Astrocyte of the cerebellum (primary cell): ENCODE measurements at regions of chr5 and their contacts with region 1.

Region 1: DNA sequence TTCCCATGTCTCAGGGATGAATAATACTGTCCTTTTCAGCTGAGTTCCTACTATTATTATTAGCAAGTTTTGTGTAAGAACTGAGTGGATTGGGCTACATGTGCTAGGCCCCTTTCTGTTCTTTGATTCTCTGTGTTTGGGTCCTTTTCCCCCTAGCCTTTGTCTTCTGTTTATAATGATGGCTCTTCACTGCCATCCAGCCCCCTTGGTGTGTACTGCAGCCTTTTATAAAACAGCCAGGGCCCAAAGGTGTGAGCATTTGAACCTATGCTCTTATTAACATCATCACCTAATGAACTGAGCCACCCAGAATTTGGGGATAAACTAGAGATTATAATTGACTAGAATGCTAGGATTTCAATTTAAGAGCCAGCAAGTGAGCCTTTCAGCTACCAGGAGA is 52.6 kb downstream of the PLAC8L1 start:
- DNase-seq: no peak
- H3K4me3 ChIP-seq: no peak overlapping the region
- CTCF ChIP-seq: peak; percentile 51

Region 2: GRCh38 chr5:145681686-145682085 is 371.1 kb before region 1 on chr5:
- in situ Hi-C with region 1: loop called (anchors 25 kb)
- DNase-seq: peak; percentile 63
- H3K4me3 ChIP-seq: no peak overlapping the region
- CTCF ChIP-seq: peak; percentile 89